ENCODE measurements at regions of chr7 and their contacts with region 1.

Region 1: GRCh38 chr7:92461027-92462003 is 14.0 kb downstream of the GATAD1 start:
- DNase-seq: no peak
- H3K4me3 ChIP-seq: no peak overlapping the region
- H3K27ac ChIP-seq: no peak overlapping the region
- H3K27me3 ChIP-seq: no peaks in the 10 kb centered on the region
- CTCF ChIP-seq: peak; percentile 82

Region 2: GRCh38 chr7:92415225-92415624 is 46.1 kb before region 1 on chr7:
- CTCF ChIA-PET with region 1: interaction called, 12 read pairs
- POLR2A ChIA-PET with region 1: no interaction called
- DNase-seq: peak; percentile 3
- H3K4me3 ChIP-seq: no peak overlapping the region
- H3K27ac ChIP-seq: no peak overlapping the region
- H3K27me3 ChIP-seq: peaks cover 10% of the 10 kb centered on the region
- CTCF ChIP-seq: no peak

Region 3: GRCh38 chr7:92421676-92422435 is 39.5 kb before region 1 on chr7:
- CTCF ChIA-PET with region 1: interaction called, 12 read pairs
- POLR2A ChIA-PET with region 1: no interaction called
- DNase-seq: no peak
- H3K4me3 ChIP-seq: no peak overlapping the region
- H3K27ac ChIP-seq: no peak overlapping the region
- H3K27me3 ChIP-seq: peaks cover 4% of the 10 kb centered on the region
- CTCF ChIP-seq: no peak

Region 4: DNA sequence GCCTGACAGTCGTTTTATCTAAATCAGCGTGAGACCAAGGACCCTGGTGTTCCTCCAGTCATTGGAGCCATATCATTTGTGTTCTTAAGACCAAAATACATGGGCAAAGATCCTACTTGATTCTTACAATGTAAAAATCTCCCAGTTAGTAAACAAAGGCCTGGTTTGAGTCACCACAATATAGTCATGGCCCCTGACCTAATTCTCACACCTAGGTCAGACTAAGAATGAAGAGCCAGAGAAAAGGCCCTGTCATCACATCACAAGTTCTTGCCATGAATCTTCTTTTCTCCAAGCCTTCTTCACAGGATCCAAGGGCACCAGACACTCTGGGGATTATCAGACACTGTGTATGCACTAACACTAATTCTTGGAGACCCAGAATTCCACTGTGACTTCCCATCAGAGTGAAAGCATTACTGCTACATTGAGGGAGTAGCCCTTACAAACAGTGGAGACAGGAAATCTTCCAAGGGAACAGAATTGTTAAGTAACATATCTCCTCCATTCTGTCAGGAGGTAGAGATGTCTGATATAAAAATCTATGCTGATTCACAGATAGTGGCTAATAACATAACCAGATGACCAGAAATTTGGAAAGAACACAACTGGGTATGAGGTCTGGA is 24.1 kb after region 1 on chr7:
- CTCF ChIA-PET with region 1: interaction called, 12 read pairs
- POLR2A ChIA-PET with region 1: no interaction called
- DNase-seq: no peak
- H3K4me3 ChIP-seq: no peak overlapping the region
- H3K27ac ChIP-seq: no peak overlapping the region
- H3K27me3 ChIP-seq: no peaks in the 10 kb centered on the region
- CTCF ChIP-seq: no peak

Region 5: GRCh38 chr7:92682903-92683539 is 221.7 kb after region 1 on chr7:
- CTCF ChIA-PET with region 1: no interaction called
- POLR2A ChIA-PET with region 1: no interaction called
- DNase-seq: no peak
- H3K4me3 ChIP-seq: no peak overlapping the region
- H3K27ac ChIP-seq: no peak overlapping the region
- H3K27me3 ChIP-seq: no peaks in the 10 kb centered on the region
- CTCF ChIP-seq: no peak

Region 6: GRCh38 chr7:92763636-92764423 is 302.5 kb after region 1 on chr7:
- CTCF ChIA-PET with region 1: no interaction called
- POLR2A ChIA-PET with region 1: no interaction called
- DNase-seq: no peak
- H3K4me3 ChIP-seq: no peak overlapping the region
- H3K27ac ChIP-seq: no peak overlapping the region
- H3K27me3 ChIP-seq: no peaks in the 10 kb centered on the region
- CTCF ChIP-seq: no peak

Measured in AG04450 (cell line).